Mammary epithelial cell (primary cell): ENCODE measurements at regions of chr5 and their contacts with region 1.

Region 1: DNA sequence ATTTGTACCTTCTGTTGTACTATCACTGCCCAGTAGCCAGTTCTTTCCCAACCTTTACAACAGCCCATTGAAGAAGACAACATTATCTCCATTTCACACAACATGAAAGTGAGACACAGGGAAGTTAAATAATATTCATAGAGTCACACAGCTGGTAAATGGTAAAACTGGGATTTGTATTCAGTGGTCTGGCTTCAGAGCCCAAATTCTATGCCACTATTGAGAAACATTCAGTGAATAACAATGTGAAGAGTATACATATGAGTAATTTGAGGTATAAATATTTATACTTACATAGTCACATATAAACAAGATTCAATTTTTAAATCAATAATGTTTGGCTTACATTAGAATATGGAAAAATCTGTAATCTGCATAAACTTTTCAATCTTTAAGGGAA is 13.8 kb downstream of the SMIM15 start:
- DNase-seq: no peak
- H3K4me3 ChIP-seq: no peak overlapping the region
- H3K27ac ChIP-seq: no peak overlapping the region
- H3K4me1 ChIP-seq: no peaks in the 10 kb centered on the region
- H3K27me3 ChIP-seq: no peaks in the 10 kb centered on the region
- CTCF ChIP-seq: no peak

Region 2: DNA sequence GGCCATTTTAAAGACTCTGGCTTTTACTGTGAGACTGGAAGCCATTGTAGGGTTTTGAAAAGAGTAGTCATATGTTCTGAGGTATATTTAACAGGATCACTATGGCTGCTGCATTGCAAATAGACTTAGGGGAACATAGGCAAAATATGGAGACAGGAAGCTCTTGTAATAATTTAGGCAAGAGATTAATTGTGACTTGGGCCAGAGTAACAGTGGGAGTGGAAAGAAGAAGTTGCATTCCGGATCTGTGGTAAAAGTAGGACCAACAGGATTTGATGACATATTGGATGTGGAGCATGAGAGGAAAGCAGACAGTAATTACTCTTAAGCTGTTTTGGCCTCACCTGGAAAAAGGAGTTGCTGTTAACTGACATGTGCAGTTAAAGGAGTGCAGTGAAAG is 71.9 kb before region 1 on chr5:
- CTCF ChIA-PET with region 1: no interaction called
- dilution Hi-C with region 1: loop called (anchors 5 kb)
- in situ Hi-C with region 1: no loop called
- intact Hi-C with region 1: no loop called
- DNase-seq: no peak
- H3K4me3 ChIP-seq: no peak overlapping the region
- H3K27ac ChIP-seq: no peak overlapping the region
- H3K4me1 ChIP-seq: no peaks in the 10 kb centered on the region
- H3K27me3 ChIP-seq: no peaks in the 10 kb centered on the region
- CTCF ChIP-seq: no peak